Panc1 (cell line): ENCODE measurements at regions of chr12 and their contacts with region 1.

Region 1: GRCh38 chr12:41819948-41820347 is 324.7 kb downstream of the GXYLT1 start:
- DNase-seq: no peak
- ATAC-seq: no peak
- H3K4me3 ChIP-seq: no peak overlapping the region
- H3K27ac ChIP-seq: no peak overlapping the region
- H3K4me1 ChIP-seq: no peaks in the 10 kb centered on the region
- H3K27me3 ChIP-seq: no peaks in the 10 kb centered on the region
- CTCF ChIP-seq: no peak

Region 2: DNA sequence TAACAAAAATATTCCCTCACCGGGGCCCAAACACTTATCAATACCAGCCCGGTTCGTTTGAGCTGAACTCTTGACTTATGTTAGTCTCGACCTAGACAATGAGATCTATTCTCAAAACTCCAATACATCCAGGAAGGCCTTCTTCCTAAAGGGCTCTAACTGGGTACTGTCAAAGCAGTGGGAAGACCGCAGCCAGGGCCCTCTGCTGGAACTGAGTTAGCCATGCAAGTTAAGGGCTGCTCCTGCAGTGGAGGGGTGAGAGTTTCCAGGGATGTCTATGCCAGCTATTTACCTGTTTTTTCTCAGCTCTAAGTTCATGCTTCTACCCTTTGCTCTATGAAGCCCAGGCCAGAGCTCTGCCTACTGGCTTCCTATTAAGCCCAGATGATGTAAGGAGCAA is 24.0 kb before region 1 on chr12:
- CTCF ChIA-PET with region 1: no interaction called
- POLR2A ChIA-PET with region 1: interaction called, 20 read pairs
- in situ Hi-C with region 1: no loop called
- intact Hi-C with region 1: no loop called
- DNase-seq: no peak
- ATAC-seq: no peak
- H3K4me3 ChIP-seq: no peak overlapping the region
- H3K27ac ChIP-seq: no peak overlapping the region
- H3K4me1 ChIP-seq: no peaks in the 10 kb centered on the region
- H3K27me3 ChIP-seq: no peaks in the 10 kb centered on the region
- CTCF ChIP-seq: 0 out of 2 replicates have a peak, but pooled peaks have one; percentile 9